ENCODE measurements at regions of chr5 and their contacts with region 1.

Region 1: DNA sequence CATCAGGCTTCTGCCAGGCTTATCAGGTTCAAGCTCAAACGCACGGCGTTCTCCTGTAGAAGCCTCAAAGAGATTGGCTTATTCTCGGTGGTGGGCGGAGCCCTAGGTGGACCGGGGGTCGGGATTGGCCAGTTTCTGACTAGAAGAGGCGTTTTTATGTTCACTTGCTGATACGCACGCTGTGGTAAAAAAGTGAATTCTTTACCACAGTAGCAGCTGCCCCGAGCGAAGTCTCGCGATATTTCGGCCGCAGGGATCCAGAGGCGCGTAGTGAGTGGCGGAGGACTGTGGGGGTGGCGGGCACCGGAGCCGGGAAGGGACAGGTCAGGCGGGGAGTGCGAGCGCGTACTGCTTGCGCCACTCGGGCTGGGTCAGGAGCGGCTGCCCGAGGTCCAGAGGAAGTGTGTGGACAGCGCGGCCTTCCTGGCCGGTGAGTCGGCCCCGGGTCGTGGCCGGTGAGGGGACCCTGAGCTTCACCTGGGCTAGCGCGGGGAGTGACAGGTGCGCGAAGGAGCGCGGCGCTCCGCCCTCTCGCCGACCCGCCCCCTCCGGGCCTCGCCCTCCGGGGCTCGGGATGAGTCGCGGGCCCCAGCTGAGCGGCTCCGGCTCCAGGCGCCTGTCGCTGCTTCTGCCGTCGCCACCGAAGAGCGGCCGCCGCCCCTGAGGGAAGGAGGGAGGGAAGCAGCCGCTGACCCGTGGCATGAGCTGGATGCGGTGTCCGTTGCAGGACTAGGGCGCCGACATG is at the start of gene DMXL1:
- DNase-seq: peak; percentile 100
- H3K4me3 ChIP-seq: peak within 1 kb of the TSS; percentile 79
- H3K27ac ChIP-seq: peak within 1 kb of the TSS; percentile 84
- H3K4me1 ChIP-seq: peaks cover 29% of the 10 kb centered on the region
- CTCF ChIP-seq: no peak
- total RNA-seq, gene DMXL1: 43.0 and 76.6 TPM in 2 replicates

Region 2: DNA sequence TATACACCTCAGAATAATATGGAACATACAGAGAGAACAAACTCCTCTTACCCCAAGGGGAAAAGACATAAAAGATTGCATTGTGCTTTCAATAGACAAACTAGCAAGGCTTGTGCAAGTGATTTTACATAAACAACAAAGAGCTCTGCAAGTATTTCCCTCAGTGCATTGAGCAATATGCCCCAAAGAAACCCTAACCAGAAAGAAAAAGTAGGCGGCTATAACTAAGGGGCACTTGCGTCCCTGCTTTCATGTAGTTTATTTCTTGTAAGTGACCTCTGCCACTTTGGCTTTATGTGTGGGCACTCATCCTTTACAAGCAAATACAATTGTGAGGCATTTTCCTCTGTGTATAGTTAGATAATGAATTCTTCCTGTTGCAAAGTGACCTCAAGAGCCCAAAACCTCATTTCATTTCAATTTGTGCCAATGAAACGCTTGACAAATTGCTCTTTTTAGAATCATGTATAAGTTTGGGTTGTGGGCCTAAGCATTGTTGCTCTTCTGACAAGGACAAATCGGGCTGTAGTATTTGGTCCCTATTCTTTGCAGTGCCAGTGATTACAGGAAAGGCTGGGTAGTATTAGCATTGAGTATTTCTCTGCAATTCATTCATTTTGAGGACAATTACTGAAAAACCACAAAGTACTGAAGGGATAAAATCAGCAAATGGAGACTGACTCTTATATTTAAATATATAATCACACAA is 364.9 kb before region 1 on chr5:
- CTCF ChIA-PET with region 1: no interaction called
- POLR2A ChIA-PET with region 1: no interaction called
- intact Hi-C with region 1: no loop called
- DNase-seq: no peak
- H3K4me3 ChIP-seq: no peak overlapping the region
- H3K27ac ChIP-seq: no peak overlapping the region
- H3K4me1 ChIP-seq: no peaks in the 10 kb centered on the region
- CTCF ChIP-seq: no peak

Region 3: GRCh38 chr5:119022017-119022745 is 48.8 kb before region 1 on chr5:
- CTCF ChIA-PET with region 1: interaction called, 3 read pairs
- POLR2A ChIA-PET with region 1: interaction called, 13 read pairs
- intact Hi-C with region 1: loop called (anchors 2 kb)
- DNase-seq: peak; percentile 79
- H3K4me3 ChIP-seq: no peak overlapping the region
- H3K27ac ChIP-seq: peak overlapping the region; percentile 71
- H3K4me1 ChIP-seq: peaks cover 73% of the 10 kb centered on the region
- CTCF ChIP-seq: peak; percentile 94

Region 4: GRCh38 chr5:119055294-119055693 is 15.7 kb before region 1 on chr5:
- CTCF ChIA-PET with region 1: no interaction called
- POLR2A ChIA-PET with region 1: interaction called, 11 read pairs
- intact Hi-C with region 1: no loop called
- DNase-seq: no peak
- H3K4me3 ChIP-seq: no peak overlapping the region
- H3K27ac ChIP-seq: no peak overlapping the region
- H3K4me1 ChIP-seq: no peaks in the 10 kb centered on the region
- CTCF ChIP-seq: no peak

Region 5: DNA sequence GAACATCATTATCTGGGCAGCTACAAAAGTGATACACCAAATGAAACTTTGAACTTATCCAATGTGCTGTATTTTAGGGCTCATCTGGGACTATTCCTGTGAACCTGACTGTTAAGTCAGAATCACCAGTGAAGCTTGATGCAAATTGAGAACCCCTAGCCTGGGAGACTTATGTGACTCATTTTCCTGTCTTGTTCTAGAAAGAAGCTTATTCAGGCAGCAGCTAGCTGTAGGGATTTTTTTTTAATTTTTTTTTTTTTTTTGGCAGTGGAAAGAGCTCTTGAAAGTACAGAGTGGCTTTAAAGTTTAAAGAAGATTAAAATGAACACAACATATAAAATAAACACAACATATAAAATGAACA is 203.7 kb after region 1 on chr5:
- CTCF ChIA-PET with region 1: no interaction called
- POLR2A ChIA-PET with region 1: interaction called, 6 read pairs
- intact Hi-C with region 1: loop called (anchors 2 kb)
- DNase-seq: peak; percentile 58
- H3K4me3 ChIP-seq: peak overlapping the region; percentile 48
- H3K27ac ChIP-seq: peak overlapping the region; percentile 98
- H3K4me1 ChIP-seq: peaks cover 99% of the 10 kb centered on the region
- CTCF ChIP-seq: no peak

Region 6: DNA sequence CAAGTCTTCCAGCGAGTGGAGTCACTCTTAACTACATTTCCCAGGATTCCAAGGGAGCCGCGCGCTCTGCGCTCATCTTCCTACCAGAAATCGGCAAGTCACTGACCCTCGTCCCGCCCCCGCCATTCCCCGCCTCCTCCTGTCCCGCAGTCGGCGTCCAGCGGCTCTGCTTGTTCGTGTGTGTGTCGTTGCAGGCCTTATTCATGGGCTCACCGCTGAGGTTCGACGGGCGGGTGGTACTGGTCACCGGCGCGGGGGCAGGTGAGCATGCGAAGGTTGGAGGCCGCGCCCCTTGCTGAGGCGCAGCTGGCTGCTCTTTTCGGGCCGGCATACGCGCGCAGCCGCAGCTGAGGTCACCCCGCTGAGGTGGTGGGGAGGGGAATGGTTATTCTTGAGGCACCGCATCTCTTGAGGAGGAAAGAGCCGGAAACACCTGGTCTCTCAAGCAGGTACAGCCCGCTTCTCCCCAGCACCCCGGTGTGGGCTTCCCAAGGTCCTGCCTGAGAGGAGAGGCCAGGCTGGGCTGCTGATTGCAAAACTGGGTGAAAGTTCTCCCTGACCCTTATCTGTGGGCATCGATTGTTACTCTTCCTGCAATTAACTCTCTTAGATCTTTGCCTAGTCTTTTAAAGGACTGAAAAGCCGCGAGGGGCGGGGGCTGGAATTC is 381.5 kb after region 1 on chr5 and contains the start of gene HSD17B4:
- CTCF ChIA-PET with region 1: no interaction called
- POLR2A ChIA-PET with region 1: interaction called, 3 read pairs
- intact Hi-C with region 1: loop called (anchors 1 kb)
- DNase-seq: peak; percentile 89
- H3K4me3 ChIP-seq: peak within 1 kb of the TSS; percentile 74
- H3K27ac ChIP-seq: peak within 1 kb of the TSS; percentile 33
- H3K4me1 ChIP-seq: peaks cover 20% of the 10 kb centered on the region
- CTCF ChIP-seq: no peak
- total RNA-seq, gene HSD17B4: 55.4 and 81.4 TPM in 2 replicates